ENCODE measurements at regions of chr7 and their contacts with region 1.

Region 1: DNA sequence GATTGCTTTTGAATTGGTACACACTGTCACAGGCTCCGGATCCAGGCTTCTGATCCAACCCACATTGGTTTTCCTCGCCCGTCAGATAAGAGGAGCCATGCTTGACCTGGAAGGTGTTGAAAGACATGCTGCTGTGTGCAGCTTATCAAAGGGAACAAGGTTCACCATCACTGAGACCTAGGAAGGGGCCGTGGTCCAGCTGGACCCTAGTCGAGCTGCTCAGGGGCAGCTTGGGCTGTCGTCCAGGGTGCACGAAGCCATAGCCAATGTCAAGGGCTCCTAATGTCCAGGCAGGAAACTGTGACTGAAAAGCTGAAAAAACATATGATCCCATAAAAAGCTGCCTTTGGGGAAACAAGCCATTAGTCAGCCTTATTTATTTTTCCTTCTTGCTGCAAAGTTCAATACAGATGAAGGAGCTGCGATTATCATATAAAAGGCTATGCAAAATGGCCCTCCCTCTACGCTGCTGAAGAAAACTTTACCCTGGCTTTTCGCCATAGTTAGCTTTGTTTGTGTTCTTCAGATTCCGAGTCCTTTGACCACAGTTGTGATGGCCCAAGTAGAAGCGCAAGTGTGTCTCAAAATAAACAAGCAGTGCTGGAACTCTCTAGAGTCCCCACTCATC is 118.0 kb downstream of the CREB5 start:
- DNase-seq: peak; percentile 96
- H3K4me3 ChIP-seq: peak overlapping the region in 1 of 3 experiments; percentile 16
- H3K27ac ChIP-seq: peak overlapping the region; percentile 61
- H3K4me1 ChIP-seq: peaks cover 31% of the 10 kb centered on the region
- H3K27me3 ChIP-seq: no peaks in the 10 kb centered on the region
- CTCF ChIP-seq: no peak
- POLR2A ChIP-seq: peak; percentile 62

Region 2: GRCh38 chr7:28509251-28510022 is 20.9 kb before region 1 on chr7:
- CTCF ChIA-PET with region 1: interaction called, 7 read pairs
- POLR2A ChIA-PET with region 1: no interaction called
- dilution Hi-C with region 1: no loop called
- intact Hi-C with region 1: loop called (anchors 1 kb)
- DNase-seq: peak; percentile 73
- H3K4me3 ChIP-seq: peak overlapping the region in 2 of 3 experiments; percentile 8 to 27
- H3K27ac ChIP-seq: no peak overlapping the region
- H3K4me1 ChIP-seq: peaks cover 17% of the 10 kb centered on the region
- H3K27me3 ChIP-seq: no peaks in the 10 kb centered on the region
- CTCF ChIP-seq: no peak
- POLR2A ChIP-seq: no peak

Region 3: DNA sequence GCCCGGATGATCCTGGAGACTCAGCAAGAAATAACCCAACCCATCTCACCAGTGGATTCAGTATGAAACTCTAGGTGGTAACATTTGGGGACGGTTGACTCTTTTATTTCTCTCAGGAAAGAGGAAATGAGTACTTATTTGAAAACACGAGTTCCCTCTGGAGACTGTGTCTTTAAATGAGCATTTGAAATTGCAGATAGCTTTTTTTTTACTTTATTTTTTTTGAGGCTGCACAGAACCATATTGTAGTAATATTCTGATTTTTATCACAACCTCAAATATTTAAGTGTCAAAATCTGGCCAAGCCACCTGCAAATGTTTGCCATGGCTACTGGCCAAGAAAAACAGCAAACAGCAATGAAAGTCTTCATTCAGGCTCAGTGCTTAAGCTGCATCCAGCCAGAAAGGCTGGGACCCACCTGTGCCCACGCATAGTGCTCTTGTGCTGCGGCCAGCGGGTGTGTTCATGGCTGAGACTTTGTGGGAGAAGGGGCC is 42.8 kb after region 1 on chr7:
- CTCF ChIA-PET with region 1: interaction called, 6 read pairs
- POLR2A ChIA-PET with region 1: no interaction called
- dilution Hi-C with region 1: no loop called
- intact Hi-C with region 1: loop called (anchors 2 kb)
- DNase-seq: peak; percentile 79
- H3K4me3 ChIP-seq: no peak overlapping the region
- H3K27ac ChIP-seq: no peak overlapping the region
- H3K4me1 ChIP-seq: peaks cover 21% of the 10 kb centered on the region
- H3K27me3 ChIP-seq: peaks cover 4 to 10% of the 10 kb centered on the region in 2 experiments
- CTCF ChIP-seq: no peak
- POLR2A ChIP-seq: no peak

Region 4: DNA sequence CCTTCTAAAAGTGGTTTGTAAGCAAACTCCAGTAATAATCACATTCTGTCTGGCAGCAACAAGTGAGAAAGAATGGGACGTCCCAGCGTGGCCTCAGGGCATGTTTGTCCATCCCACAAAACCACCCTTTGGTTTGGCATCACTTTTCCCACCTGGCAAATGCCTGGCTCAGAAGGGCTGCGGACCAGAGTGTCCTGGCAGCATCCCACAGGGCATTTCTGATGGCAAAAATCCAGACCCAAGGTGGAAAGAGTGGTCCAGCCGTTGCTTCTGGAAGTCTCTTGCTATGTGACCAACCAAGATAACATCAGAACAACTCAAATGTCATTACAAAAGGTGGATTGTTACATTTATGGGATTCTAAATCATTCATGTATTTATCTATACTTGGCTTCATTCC is 56.4 kb after region 1 on chr7:
- CTCF ChIA-PET with region 1: no interaction called
- POLR2A ChIA-PET with region 1: no interaction called
- dilution Hi-C with region 1: no loop called
- intact Hi-C with region 1: no loop called
- DNase-seq: no peak
- H3K4me3 ChIP-seq: no peak overlapping the region
- H3K27ac ChIP-seq: no peak overlapping the region
- H3K4me1 ChIP-seq: no peaks in the 10 kb centered on the region
- H3K27me3 ChIP-seq: peaks cover 2 to 4% of the 10 kb centered on the region in 2 experiments
- CTCF ChIP-seq: no peak
- POLR2A ChIP-seq: no peak